CD4-positive, alpha-beta memory T cell (primary cell): ENCODE measurements at regions of chr7 and their contacts with region 1.

Region 1: GRCh38 chr7:74094224-74095101 is 10.9 kb downstream of the LIMK1 start:
- DNase-seq: peak; percentile 34 to 86 (median 51)
- H3K4me3 ChIP-seq: peak overlapping the region; percentile 19 to 69
- H3K4me3 Mint-ChIP-seq: peak overlapping the region; percentile 82 to 96 (median 90)
- H3K27ac ChIP-seq: peak overlapping the region; percentile 63
- H3K27ac Mint-ChIP-seq: peak overlapping the region; percentile 93 to 97 (median 94)
- H3K4me1 ChIP-seq: peaks cover 19% of the 10 kb centered on the region
- H3K4me1 Mint-ChIP-seq: peaks cover 6 to 18% (median 16%) of the 10 kb centered on the region in 4 donors
- H3K27me3 ChIP-seq: no peaks in the 10 kb centered on the region
- H3K27me3 Mint-ChIP-seq: no peaks in the 10 kb centered on the region

Region 2: DNA sequence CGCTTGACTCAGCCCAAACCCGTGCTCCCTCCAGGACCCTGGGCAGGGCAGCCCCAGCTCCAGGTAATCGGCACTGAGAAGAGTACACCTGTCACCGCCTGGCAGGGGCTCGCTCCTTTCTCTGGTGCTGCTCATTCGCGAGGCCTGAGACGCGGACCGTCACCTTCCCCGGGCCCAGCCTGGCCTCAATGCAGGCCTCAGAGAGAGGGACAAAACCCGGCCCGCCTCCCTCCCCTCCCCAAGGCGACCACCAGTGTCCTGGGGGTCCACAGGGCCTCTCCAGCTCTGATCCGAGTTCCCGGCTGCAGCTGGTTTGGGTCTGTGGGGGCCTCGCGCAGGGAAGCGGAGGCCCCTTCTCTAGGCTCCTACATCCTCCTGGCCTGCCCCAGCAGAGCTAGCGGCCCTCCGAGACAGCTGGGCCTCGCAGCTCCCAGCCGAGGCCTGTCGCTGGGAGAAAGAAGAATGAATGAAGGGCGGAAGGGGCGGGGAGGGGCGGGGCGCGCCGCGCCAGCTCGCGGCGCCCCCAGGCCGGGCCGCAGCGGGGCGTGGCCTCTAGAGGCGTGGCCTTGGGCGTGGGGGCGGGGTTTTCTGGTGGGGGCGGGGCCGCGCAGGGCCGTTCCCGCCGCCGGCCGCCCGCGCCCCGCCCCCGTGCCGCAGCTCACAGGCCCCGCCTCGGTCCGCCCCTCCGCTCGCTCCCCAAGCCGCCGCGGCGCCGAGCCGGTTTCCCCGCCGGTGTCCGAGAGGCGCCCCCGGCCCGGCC is 11.2 kb before region 1 on chr7 and contains the start of gene LIMK1:
- CTCF ChIA-PET with region 1: no interaction called
- POLR2A ChIA-PET with region 1: interaction called, 13 read pairs
- intact Hi-C with region 1: loop called (anchors 1 kb)
- DNase-seq: peak; percentile 78 to 87 (median 83)
- H3K4me3 ChIP-seq: peak within 1 kb of the TSS; percentile 42 to 43
- H3K4me3 Mint-ChIP-seq: peak within 1 kb of the TSS; percentile 75 to 87 (median 82)
- H3K27ac ChIP-seq: peak within 1 kb of the TSS; percentile 49
- H3K27ac Mint-ChIP-seq: peak within 1 kb of the TSS; percentile 4 to 93 (median 76)
- H3K4me1 ChIP-seq: peaks cover 16% of the 10 kb centered on the region
- H3K4me1 Mint-ChIP-seq: peaks cover 4 to 15% (median 9%) of the 10 kb centered on the region in 4 donors
- H3K27me3 ChIP-seq: no peaks in the 10 kb centered on the region
- H3K27me3 Mint-ChIP-seq: no peaks in the 10 kb centered on the region
- total RNA-seq, gene LIMK1: 13.4 to 15.1 TPM